Tibial artery (tissue), 4 donors: ENCODE measurements at regions of chr2 and their contacts with region 1.

Region 1: DNA sequence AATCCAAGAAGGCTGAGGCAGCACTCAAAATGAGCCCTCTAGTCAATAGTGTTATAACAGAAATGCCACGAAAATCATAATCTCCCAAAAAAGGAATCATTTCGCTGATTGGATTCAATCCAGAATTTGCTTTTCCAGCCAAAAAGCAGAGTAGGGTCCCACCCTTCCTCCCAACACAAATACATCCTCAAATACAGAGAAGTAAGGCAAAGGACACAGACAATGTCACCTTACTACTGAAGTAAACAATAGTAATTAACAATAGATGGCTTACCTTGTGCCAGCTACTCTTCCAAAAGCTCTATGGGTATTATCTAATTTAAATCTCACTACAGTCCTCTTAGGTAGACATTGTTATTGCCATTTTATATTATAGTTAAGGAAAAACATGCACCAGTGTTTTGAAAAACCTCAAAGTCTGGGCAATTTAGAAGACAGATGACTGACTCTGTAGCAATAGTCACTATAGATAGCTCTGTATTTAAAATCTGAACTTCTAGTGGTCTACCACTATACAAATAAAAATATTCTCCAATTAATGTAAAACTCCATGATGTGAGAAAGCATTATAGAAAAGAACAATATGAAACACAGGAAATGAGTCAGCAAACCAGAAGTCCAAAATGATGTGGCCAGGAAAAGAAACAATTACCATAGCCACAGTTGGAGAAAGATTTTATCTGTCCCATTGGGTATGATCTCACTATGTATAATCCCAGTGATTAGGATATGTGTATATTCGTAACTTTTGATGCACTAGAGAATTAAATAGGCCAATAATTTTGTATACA is 305.0 kb upstream of the ERBB4 start:
- DNase-seq: no peak
- H3K4me3 ChIP-seq: no peak overlapping the region
- H3K27ac ChIP-seq: no peak overlapping the region
- H3K4me1 ChIP-seq: no peaks in the 10 kb centered on the region
- H3K27me3 ChIP-seq: no peaks in the 10 kb centered on the region
- CTCF ChIP-seq: no peak

Region 2: GRCh38 chr2:212892193-212892592 is 48.6 kb after region 1 on chr2:
- intact Hi-C with region 1: loop called (anchors 5 kb)
- DNase-seq: no peak
- H3K4me3 ChIP-seq: no peak overlapping the region
- H3K27ac ChIP-seq: no peak overlapping the region
- H3K4me1 ChIP-seq: no peaks in the 10 kb centered on the region
- H3K27me3 ChIP-seq: no peaks in the 10 kb centered on the region
- CTCF ChIP-seq: no peak

Region 3: DNA sequence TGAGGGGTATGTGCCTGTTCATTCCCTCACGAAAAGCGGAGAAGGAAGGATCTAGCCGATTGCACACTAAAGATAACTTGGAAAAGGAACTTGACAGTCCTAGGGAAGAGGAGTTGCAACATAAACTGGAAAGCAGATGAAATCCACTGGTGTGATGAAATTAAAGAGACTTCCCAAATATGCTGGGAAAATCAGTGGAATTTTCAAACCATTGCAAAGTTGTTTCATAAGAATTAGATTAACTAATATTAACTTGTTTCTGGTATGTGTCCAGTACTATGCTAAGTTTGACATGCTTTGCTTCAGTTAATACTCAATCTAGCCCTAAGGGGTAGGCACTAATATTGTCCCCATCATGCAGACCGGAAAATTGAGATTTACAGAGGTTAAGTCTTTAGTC is 85.1 kb after region 1 on chr2:
- intact Hi-C with region 1: no loop called
- DNase-seq: no peak
- H3K4me3 ChIP-seq: no peak overlapping the region
- H3K27ac ChIP-seq: no peak overlapping the region
- H3K4me1 ChIP-seq: peaks cover 0 to 6% (median 0%) of the 10 kb centered on the region in 4 donors
- H3K27me3 ChIP-seq: no peaks in the 10 kb centered on the region
- CTCF ChIP-seq: no peak